ENCODE measurements at regions of chr7 and their contacts with region 1.

Region 1: DNA sequence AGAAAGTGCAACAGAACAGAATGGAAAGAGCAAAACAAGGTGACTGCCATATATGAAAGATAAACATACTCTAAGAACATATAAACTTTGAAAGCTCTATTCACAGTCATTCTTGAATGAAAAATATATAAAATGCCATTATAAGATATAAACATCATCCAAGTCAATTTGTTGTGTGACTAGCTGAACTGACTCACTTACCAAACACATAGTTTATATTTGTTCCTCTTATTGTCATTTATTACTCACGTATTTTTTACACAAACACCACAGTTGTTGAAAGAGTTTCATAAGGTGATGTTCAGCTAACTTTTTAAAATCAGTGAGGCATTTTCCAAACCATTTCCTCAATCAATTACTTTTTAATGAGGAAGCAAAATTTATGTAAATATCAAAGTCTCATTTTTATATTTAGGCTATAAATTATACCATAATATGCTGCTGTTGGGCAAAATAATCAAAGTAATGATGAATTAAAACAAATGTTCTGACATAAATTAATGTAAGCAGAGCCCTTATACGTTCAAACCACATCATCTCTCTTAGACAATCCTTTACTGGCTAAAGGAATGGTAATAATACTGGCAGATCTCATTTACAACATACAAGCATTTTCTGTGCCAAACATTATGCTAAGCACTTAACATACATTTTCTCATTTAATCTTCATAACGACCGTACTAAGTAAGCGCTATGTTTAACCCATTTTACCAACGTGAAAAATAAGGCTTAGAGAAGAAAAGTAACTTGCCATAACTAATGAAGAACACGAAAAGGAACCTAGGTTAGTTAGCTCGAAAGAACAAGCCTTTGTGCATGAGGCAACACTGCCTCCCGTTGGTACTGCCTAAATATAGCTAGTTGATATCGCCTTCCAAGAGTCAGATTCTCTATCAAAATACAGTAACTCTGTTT is 7.3 kb downstream of the LRRN3 start:
- DNase-seq: no peak
- H3K4me3 ChIP-seq: no peak overlapping the region
- H3K27ac ChIP-seq: no peak overlapping the region
- H3K27me3 ChIP-seq: no peaks in the 10 kb centered on the region
- CTCF ChIP-seq: peak; percentile 74

Region 2: DNA sequence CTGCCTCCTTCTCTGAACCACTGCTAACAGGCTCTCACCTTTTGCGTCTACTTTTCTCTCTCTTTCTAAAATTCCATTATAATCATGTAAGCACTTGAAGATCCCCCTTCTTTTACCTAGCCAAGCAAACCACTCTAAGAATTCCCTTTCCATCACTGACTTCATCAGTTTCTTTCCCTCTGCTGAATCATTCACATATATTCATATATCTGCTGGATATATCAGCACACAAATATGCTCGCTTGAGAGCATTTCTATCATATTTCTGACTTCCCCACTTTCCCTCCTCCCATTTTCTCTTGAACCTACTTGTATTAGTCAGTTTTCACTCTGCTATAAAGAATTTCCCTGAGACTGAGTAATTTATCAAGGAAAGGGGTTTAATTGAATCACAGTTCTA is 91.6 kb before region 1 on chr7:
- CTCF ChIA-PET with region 1: no interaction called
- POLR2A ChIA-PET with region 1: no interaction called
- DNase-seq: peak; percentile 13
- H3K4me3 ChIP-seq: no peak overlapping the region
- H3K27ac ChIP-seq: no peak overlapping the region
- H3K27me3 ChIP-seq: no peaks in the 10 kb centered on the region
- CTCF ChIP-seq: no peak

Region 3: DNA sequence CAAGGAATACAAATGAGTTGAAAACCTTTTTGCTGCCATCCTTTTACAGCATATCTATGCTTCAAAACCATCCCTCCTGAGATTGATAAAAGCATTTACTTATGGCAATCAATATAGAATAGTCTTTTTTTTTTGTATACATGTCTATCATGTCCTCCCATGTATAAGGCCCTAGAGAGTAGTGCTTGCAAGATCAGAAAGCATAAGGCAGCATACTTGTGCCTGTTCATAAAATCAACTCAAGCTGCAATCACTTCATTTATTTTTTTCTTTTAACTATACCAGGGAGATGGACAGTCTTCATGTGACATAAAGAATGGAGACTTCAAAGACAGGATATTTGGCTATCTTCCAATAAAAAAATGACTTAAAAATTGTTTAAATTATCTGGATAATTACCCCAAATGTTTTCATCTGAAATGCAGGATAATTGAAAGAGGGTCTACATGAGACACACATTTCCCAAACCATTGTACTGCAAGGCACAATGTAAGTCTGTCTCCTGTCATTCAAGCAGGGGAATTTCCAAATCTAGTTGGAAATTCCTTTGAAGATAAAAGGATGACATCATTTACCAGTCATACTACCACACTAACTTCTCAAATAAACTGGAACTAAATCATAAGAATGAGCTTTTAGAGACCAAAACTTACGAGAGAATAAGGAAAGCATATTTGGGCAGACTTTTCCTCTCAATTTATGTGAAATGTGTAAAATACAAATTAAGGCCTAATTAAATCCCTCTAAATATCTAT is 15.2 kb after region 1 on chr7:
- CTCF ChIA-PET with region 1: interaction called, 11 read pairs
- POLR2A ChIA-PET with region 1: no interaction called
- DNase-seq: no peak
- H3K4me3 ChIP-seq: no peak overlapping the region
- H3K27ac ChIP-seq: no peak overlapping the region
- H3K27me3 ChIP-seq: no peaks in the 10 kb centered on the region
- CTCF ChIP-seq: no peak

Measured in AG04450 (cell line).